Caco-2 (cell line): ENCODE measurements at regions of chr1 and their contacts with region 1.

Region 1: GRCh38 chr1:156445789-156446263 is 54.7 kb downstream of the MEF2D start:
- DNase-seq: peak; percentile 89 to 92
- H3K4me3 ChIP-seq: no peak overlapping the region
- H3K4me3 Mint-ChIP-seq: no peak overlapping the region
- H3K27ac Mint-ChIP-seq: no peak overlapping the region
- H3K4me1 ChIP-seq: no peaks in the 10 kb centered on the region
- H3K4me1 Mint-ChIP-seq: no peaks in the 10 kb centered on the region
- H3K27me3 ChIP-seq: peaks cover 1% of the 10 kb centered on the region; the same call in 1 of the 2 replicates
- H3K27me3 Mint-ChIP-seq: peaks cover 11% of the 10 kb centered on the region
- CTCF ChIP-seq: peak; percentile 93 to 95

Region 2: GRCh38 chr1:156356875-156357534 is 88.8 kb before region 1 on chr1:
- CTCF ChIA-PET with region 1: interaction called, 3 read pairs
- POLR2A ChIA-PET with region 1: no interaction called
- intact Hi-C with region 1: loop called (anchors 1 kb)
- DNase-seq: peak; percentile 87 to 90
- H3K4me3 ChIP-seq: peak overlapping the region; percentile 19
- H3K4me3 Mint-ChIP-seq: peak overlapping the region; percentile 67
- H3K27ac Mint-ChIP-seq: peak overlapping the region; percentile 60
- H3K4me1 ChIP-seq: 0 out of 2 replicates have a peak, but pooled peaks cover 3% of the 10 kb centered on the region
- H3K4me1 Mint-ChIP-seq: peaks cover 9% of the 10 kb centered on the region
- H3K27me3 ChIP-seq: no peaks in the 10 kb centered on the region
- H3K27me3 Mint-ChIP-seq: no peaks in the 10 kb centered on the region
- CTCF ChIP-seq: peak; percentile 93 to 99

Region 3: GRCh38 chr1:156368889-156369684 is 76.7 kb before region 1 on chr1 and contains the start of gene RHBG:
- CTCF ChIA-PET with region 1: interaction called, 13 read pairs
- POLR2A ChIA-PET with region 1: interaction called, 3 read pairs
- intact Hi-C with region 1: no loop called
- DNase-seq: peak; percentile 67 to 74
- H3K4me3 ChIP-seq: peak within 1 kb of the TSS; percentile 51
- H3K4me3 Mint-ChIP-seq: peak within 1 kb of the TSS; percentile 75
- H3K27ac Mint-ChIP-seq: peak within 1 kb of the TSS; percentile 72
- H3K4me1 ChIP-seq: peaks cover 65% of the 10 kb centered on the region
- H3K4me1 Mint-ChIP-seq: peaks cover 23% of the 10 kb centered on the region
- H3K27me3 ChIP-seq: no peaks in the 10 kb centered on the region
- H3K27me3 Mint-ChIP-seq: no peaks in the 10 kb centered on the region
- CTCF ChIP-seq: no peak
- total RNA-seq, gene RHBG: 4.6 and 6.5 TPM in 2 replicates

Region 4: DNA sequence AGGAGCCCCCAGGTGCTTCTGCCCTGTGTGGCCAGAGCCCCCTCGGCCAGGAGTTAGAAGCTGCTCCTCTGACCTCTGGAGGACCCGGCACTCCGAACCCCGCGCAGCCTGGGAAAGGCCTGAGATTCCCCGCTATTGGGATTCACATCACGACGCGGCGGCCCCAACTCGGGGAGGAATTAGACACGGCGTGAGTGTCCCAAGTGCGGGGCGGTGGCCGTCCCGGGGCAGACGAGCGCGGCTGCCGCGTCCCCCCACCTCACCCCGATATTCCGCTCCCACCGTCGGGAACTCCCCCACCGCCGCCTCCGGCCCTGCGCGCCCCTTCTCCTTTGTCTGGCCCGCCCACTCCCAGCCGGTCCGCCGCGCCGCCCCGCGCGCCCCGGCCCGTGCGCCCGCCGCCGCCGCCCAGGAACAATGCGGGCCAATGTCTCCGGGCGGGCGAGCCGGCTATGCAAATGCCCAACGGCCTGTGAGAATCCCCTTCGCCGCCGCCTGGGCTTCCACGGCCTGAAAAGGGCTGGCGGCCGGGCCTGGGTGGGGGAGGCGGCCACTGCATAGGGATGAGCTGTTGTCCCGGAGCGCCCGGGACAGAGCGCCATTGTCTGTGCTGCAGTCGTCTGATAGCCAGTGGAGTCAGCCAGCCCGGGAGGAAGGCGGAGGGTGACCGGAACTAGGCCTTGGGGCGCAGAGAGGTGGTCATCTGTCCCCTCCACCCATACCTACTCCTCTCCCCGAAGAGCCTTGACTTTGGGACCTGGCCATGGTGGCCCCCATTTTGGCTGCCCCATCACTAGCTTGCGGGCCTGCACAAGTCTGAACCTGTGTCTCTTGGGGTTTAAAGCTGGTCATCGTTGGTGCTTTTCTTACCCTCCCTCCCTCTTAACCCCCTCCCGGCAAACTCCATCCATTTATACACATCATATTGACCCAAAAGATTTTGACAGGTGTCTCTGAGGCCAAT is 57.4 kb before region 1 on chr1:
- CTCF ChIA-PET with region 1: interaction called, 163 read pairs
- POLR2A ChIA-PET with region 1: interaction called, 6 read pairs
- intact Hi-C with region 1: loop called (anchors 1 kb)
- DNase-seq: no peak
- H3K4me3 ChIP-seq: no peak overlapping the region
- H3K4me3 Mint-ChIP-seq: no peak overlapping the region
- H3K27ac Mint-ChIP-seq: no peak overlapping the region
- H3K4me1 ChIP-seq: no peaks in the 10 kb centered on the region
- H3K4me1 Mint-ChIP-seq: no peaks in the 10 kb centered on the region
- H3K27me3 ChIP-seq: no peaks in the 10 kb centered on the region
- H3K27me3 Mint-ChIP-seq: no peaks in the 10 kb centered on the region
- CTCF ChIP-seq: no peak

Region 5: GRCh38 chr1:156421062-156421938 is 24.5 kb before region 1 on chr1:
- CTCF ChIA-PET with region 1: interaction called, 17 read pairs
- POLR2A ChIA-PET with region 1: interaction called, 4 read pairs
- intact Hi-C with region 1: loop called (anchors 1 kb)
- DNase-seq: peak; percentile 91 to 93
- H3K4me3 ChIP-seq: peak overlapping the region; percentile 47
- H3K4me3 Mint-ChIP-seq: peak overlapping the region; percentile 80
- H3K27ac Mint-ChIP-seq: peak overlapping the region; percentile 76
- H3K4me1 ChIP-seq: peaks cover 41% of the 10 kb centered on the region
- H3K4me1 Mint-ChIP-seq: peaks cover 16% of the 10 kb centered on the region
- H3K27me3 ChIP-seq: no peaks in the 10 kb centered on the region; the same call in 1 of the 2 replicates
- H3K27me3 Mint-ChIP-seq: peaks cover 11% of the 10 kb centered on the region
- CTCF ChIP-seq: no peak

Region 6: DNA sequence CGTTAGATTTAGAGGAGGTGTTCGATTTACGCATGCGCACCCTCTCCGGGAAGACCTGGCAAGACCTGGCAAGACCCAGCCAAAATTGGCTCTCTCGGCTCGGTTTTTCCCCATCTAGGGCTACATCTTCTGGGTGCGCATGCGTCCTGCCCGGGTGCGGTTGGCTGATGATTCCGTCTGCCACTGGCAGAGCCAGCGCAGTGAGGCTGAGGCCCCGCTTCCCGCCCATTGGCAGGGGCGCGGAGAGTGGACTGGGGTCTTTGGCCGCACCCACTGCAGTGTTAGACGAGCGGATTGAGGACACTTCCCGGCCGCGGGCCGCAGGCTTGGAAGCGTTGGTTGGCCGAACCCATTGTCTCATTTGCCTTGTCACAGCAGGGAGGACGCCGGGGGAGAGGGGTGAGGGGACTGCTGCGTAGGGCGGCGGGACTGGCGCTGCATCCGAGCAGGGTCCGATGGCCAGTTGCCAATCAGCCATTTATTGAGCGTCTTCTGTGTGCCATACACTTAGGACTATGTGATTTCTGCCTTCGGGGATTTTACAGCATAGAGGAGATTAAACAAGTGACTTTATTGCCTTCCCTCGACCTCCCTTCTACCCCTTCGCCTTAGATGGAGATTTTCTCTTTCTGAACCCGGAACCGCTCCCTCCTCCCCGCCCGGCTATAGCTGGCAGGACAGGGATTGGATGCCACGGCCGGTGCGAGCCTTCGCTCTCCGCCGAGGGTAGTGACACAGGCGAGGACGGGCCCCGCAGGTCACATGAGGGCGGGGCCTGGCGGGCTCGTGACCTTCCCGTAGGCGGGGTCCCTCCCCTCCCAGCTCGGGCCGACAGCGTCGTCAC is 11.0 kb after region 1 on chr1:
- CTCF ChIA-PET with region 1: interaction called, 34 read pairs
- POLR2A ChIA-PET with region 1: interaction called, 5 read pairs
- intact Hi-C with region 1: no loop called
- DNase-seq: peak; percentile 98
- H3K4me3 ChIP-seq: peak overlapping the region; percentile 70
- H3K4me3 Mint-ChIP-seq: peak overlapping the region; percentile 88
- H3K27ac Mint-ChIP-seq: peak overlapping the region; percentile 90
- H3K4me1 ChIP-seq: peaks cover 13% of the 10 kb centered on the region
- H3K4me1 Mint-ChIP-seq: peaks cover 1% of the 10 kb centered on the region
- H3K27me3 ChIP-seq: no peaks in the 10 kb centered on the region
- H3K27me3 Mint-ChIP-seq: no peaks in the 10 kb centered on the region
- CTCF ChIP-seq: no peak

Region 7: DNA sequence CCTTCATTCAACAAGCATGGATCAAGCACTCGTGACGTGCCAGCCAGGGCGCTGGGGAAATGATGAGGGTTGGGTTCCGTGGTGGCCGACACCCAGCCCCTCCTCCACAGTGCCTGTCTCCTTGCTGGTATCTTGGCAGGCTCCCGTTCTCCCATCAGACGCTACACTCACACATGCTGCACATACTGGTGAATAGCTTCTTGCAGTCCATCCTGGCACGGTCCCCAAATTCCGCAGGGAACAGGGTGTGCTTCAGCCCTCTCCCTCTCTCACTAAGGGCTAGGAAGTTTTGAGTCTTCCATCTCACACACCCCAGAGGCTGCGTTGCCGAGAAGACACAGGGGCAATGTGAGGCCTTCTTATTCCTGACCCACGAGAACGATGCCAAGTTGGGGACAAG is 64.9 kb after region 1 on chr1:
- CTCF ChIA-PET with region 1: no interaction called
- POLR2A ChIA-PET with region 1: no interaction called
- intact Hi-C with region 1: no loop called
- DNase-seq: no peak
- H3K4me3 ChIP-seq: no peak overlapping the region
- H3K4me3 Mint-ChIP-seq: no peak overlapping the region
- H3K27ac Mint-ChIP-seq: no peak overlapping the region
- H3K4me1 ChIP-seq: peaks cover 3% of the 10 kb centered on the region
- H3K4me1 Mint-ChIP-seq: peaks cover under 1% of the 10 kb centered on the region
- H3K27me3 ChIP-seq: no peaks in the 10 kb centered on the region
- H3K27me3 Mint-ChIP-seq: no peaks in the 10 kb centered on the region
- CTCF ChIP-seq: no peak